OCI-LY7 (cell line): ENCODE measurements at regions of chr5 and their contacts with region 1.

Region 1: DNA sequence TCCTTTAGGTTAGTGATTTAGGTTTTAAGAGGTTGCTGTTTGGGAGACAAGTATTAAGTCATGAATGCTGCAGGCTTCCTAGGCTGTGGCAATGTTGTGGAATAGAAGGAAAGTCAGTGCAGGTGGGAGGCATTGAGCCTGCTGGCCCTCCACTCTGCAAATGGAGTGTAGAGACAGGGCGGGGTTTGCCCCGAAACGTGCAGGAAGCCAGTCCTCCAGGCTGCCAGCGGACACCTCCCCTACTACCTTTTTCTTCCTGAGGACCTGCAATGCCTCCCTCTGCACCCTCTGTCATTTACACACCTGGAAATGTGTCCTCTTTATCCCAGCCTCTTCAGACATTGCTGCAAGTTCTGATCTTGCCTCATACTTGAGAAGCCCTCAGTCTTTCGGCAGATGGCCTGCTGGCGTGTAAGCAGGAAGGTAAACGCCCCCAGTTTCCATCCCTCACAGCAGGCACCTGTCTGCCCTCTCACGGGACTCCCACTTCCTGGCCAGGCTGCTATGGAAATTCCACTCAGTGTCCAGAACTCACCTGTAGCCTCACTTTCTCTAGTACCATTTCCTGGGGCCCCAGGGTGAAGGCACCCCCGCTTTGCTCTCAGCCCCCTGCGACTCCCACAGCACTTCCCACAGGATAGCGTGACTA is 81.6 kb upstream of the BOD1 start:
- DNase-seq: peak; percentile 83
- H3K4me3 ChIP-seq: peak overlapping the region; percentile 46
- H3K27ac ChIP-seq: peak overlapping the region; percentile 80
- H3K4me1 ChIP-seq: peaks cover 68% of the 10 kb centered on the region
- CTCF ChIP-seq: no peak

Region 2: DNA sequence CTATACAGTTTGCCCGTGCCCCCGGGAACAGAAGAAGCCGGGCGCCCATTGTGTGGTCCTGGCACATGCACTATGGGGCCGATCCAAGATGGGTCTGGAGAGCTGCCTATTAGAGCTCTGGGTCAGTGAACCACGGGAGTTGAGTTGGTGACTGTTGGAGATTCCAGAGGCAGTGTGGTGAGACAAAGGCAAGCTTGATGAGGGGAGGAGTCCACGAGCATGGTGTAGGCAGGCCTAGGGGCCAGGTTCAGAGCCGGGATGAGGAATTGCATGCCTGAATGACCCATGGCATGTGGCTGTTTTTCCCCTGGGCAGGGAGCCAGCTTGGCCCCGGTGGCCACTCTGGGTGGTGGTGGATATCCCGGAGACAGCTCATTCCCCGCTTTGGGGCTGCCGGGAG is 285.5 kb before region 1 on chr5:
- CTCF ChIA-PET with region 1: no interaction called
- POLR2A ChIA-PET with region 1: no interaction called
- intact Hi-C with region 1: no loop called
- DNase-seq: no peak
- H3K4me3 ChIP-seq: no peak overlapping the region
- H3K27ac ChIP-seq: no peak overlapping the region
- H3K4me1 ChIP-seq: no peaks in the 10 kb centered on the region
- CTCF ChIP-seq: no peak

Region 3: DNA sequence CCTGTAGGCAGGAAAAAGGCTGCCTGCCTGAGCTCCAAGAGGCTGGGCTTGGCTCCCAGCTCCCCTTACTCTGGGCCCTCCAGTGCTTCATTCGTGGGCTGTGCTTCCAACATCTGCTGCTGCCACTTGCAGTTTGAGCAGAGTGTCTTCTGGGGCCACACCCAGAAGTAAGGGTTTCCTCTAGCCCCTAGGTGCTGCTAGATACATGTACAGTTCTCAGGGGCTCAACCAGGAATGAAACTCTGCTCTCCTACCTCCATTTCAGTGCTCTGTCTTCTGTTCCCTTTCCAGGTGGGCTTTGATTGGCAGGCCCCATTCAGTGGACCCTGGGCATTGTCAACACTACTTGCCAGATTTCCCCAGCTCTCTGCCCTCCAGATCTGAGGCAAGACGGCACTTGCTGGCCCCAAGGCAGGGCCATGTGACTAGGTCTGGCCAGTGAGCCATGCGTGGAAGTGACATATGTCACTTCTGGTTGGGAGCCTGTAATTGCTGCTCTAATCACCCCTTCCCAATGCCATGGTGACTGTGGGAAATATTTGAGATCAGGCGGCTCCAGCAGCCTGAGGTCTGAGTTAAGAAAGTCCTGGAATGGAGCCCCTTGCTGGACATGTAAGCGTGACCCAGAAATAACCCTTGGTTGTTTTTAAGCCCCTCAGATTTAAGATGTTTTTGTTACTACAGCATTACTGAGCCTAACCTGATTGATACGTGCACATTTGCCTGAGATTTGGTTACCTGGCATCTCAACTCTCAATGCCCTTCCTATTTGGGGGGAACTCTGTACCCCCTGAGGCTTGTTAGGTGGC is 72.2 kb before region 1 on chr5:
- CTCF ChIA-PET with region 1: interaction called, 3 read pairs
- POLR2A ChIA-PET with region 1: interaction called, 4 read pairs
- intact Hi-C with region 1: loop called (anchors 2 kb)
- DNase-seq: peak; percentile 83
- H3K4me3 ChIP-seq: no peak overlapping the region
- H3K27ac ChIP-seq: no peak overlapping the region
- H3K4me1 ChIP-seq: peaks cover 50% of the 10 kb centered on the region
- CTCF ChIP-seq: peak; percentile 78

Region 4: DNA sequence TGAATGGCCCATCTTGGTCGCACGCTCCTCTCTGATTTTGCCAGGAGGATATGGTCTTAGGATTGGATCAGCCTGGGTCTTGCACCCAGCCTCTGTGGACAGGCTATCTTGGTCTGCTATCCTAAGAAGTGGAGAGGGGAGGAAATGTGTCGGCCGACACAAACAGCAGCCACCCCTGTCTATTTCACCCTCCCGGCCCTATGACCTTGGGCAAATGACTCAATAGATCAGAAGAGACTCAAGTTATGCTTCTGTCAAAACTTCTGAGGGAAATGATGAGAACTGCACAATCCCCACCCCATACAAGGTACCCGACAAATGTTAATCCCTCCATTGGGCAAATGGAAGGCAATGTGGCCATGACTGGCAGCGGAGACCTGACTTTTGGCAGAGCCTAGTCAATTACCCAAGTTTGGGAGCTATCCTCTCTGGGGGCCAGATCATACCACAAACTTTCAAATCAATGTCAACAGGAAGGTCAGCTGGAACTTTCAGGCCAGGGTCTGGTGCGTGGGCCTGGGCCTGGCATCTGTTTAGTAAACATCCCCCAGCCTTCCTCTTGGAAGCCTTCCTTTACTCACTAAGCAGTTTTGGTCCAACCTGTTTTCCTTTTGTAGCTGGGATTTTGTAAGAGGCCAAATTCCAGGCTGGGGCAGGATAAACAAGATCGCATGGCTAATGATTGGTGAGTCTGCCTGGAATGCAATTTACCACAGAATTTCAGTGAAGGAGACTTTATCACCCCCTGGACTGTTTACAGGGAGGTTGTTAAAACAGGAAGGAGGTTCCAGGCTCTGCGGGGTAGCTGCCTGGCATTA is 125.9 kb after region 1 on chr5:
- CTCF ChIA-PET with region 1: interaction called, 3 read pairs
- POLR2A ChIA-PET with region 1: interaction called, 6 read pairs
- intact Hi-C with region 1: loop called (anchors 1 kb)
- DNase-seq: no peak
- H3K4me3 ChIP-seq: peak overlapping the region; percentile 27
- H3K27ac ChIP-seq: peak overlapping the region; percentile 99
- H3K4me1 ChIP-seq: peaks cover 84% of the 10 kb centered on the region
- CTCF ChIP-seq: no peak